Activated naive CD4-positive, alpha-beta T cell treated with anti-CD3 and anti-CD28 coated beads for 36 hours (primary cell): ENCODE measurements at regions of chr6 and their contacts with region 1.

Region 1: GRCh38 chr6:100880853-100881706 is at the start of gene ASCC3:
- DNase-seq: peak; percentile 93
- H3K4me3 Mint-ChIP-seq: peak within 1 kb of the TSS; percentile 100
- H3K27ac Mint-ChIP-seq: peak within 1 kb of the TSS; percentile 99
- H3K4me1 Mint-ChIP-seq: peaks cover 40% of the 10 kb centered on the region
- H3K27me3 Mint-ChIP-seq: no peaks in the 10 kb centered on the region
- total RNA-seq, gene ASCC3: 55.9 to 58.4 TPM

Region 2: GRCh38 chr6:100892693-100893092 is 11.6 kb after region 1 on chr6:
- CTCF ChIA-PET with region 1: no interaction called
- intact Hi-C with region 1: no loop called
- DNase-seq: no peak
- H3K4me3 Mint-ChIP-seq: no peak overlapping the region
- H3K27ac Mint-ChIP-seq: no peak overlapping the region
- H3K4me1 Mint-ChIP-seq: no peaks in the 10 kb centered on the region
- H3K27me3 Mint-ChIP-seq: no peaks in the 10 kb centered on the region

Region 3: GRCh38 chr6:101011186-101011585 is 130.1 kb after region 1 on chr6:
- CTCF ChIA-PET with region 1: no interaction called
- intact Hi-C with region 1: loop called (anchors 1 kb)
- DNase-seq: peak; percentile 38
- H3K4me3 Mint-ChIP-seq: no peak overlapping the region
- H3K27ac Mint-ChIP-seq: no peak overlapping the region
- H3K4me1 Mint-ChIP-seq: peaks cover 23% of the 10 kb centered on the region
- H3K27me3 Mint-ChIP-seq: no peaks in the 10 kb centered on the region